Posterior vena cava (tissue), 2 donors: ENCODE measurements at regions of chr4 and their contacts with region 1.

Region 1: GRCh38 chr4:30726090-30726675 is 6.0 kb downstream of the PCDH7 start:
- DNase-seq: no peak

Region 2: DNA sequence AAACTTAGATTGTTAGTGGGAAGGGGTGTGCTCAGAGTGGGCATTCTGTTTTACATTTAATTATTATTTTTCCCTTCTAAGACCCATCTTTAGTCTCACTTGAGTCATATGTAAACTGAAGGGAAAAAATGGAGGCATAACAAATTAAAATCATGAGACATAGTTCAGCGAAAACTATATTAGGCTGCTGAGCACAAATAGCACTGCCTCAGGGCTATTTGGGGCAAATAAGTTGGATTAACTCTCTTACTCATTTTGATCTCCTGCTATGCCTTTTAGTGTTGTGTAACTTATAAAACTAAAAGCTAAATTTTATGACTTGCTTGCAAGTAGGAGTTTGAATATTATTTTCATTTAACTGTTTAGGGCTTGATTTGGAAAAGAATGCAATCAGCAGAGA is 1335.3 kb before region 1 on chr4:
- intact Hi-C with region 1: loop called in 1 of 2 experiments (anchors 10 kb)
- DNase-seq: no peak

Region 3: GRCh38 chr4:30744957-30745640 is 18.9 kb after region 1 on chr4:
- intact Hi-C with region 1: no loop called
- DNase-seq: no peak

Region 4: GRCh38 chr4:30903502-30904217 is 177.5 kb after region 1 on chr4:
- intact Hi-C with region 1: no loop called
- DNase-seq: no peak

Region 5: GRCh38 chr4:31052519-31052918 is 326.3 kb after region 1 on chr4:
- intact Hi-C with region 1: no loop called
- DNase-seq: no peak